MCF 10A (cell line): ENCODE measurements at regions of chr9 and their contacts with region 1.

Region 1: DNA sequence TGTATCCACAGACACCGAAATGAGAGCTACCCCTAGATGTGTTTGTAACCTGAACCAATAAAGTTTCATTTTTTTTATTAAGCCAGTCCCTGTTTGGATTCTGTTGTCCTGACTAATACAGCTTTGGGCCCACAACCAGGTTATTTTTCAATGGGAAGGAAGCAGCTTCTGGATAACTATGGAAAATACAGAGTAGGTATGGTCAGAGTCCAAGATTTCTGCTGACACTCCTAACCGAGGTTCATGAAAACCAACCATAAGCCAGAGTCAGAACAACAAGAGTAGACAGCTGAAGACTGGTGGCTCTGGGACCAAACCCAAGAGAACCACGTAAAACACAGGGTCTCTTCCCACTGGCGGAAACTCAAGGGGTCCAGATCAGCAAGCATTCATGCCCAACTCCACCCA is 10.8 kb downstream of the KLF9 start:
- DNase-seq: no peak
- H3K4me3 Mint-ChIP-seq: no peak overlapping the region
- H3K27ac Mint-ChIP-seq: no peak overlapping the region
- H3K4me1 Mint-ChIP-seq: peaks cover 19% of the 10 kb centered on the region
- H3K27me3 Mint-ChIP-seq: no peaks in the 10 kb centered on the region
- CTCF ChIP-seq: no peak

Region 2: GRCh38 chr9:70205367-70206032 is 198.1 kb before region 1 on chr9:
- CTCF ChIA-PET with region 1: no interaction called
- POLR2A ChIA-PET with region 1: no interaction called
- intact Hi-C with region 1: no loop called
- DNase-seq: no peak
- H3K4me3 Mint-ChIP-seq: peak overlapping the region; percentile 72
- H3K27ac Mint-ChIP-seq: no peak overlapping the region
- H3K4me1 Mint-ChIP-seq: no peaks in the 10 kb centered on the region
- H3K27me3 Mint-ChIP-seq: no peaks in the 10 kb centered on the region
- CTCF ChIP-seq: no peak

Region 3: DNA sequence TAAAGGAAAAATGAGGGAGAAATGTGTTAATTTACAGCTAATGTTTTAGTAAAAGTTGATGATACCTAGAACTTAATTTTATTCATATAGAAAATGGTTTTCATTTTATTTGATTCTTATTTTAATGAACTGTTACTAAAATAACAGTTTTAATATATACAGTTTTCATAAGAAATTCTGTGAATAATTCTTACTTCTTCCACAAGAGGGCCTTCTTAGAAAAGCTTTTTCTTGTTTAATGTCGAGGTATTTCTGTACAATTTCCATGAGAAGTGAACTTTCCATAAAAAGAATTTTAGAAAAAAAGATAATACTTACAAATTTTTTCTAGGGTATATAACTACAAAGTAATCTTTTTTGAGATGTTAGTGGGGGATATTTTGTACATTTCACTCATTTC is 63.0 kb before region 1 on chr9:
- CTCF ChIA-PET with region 1: interaction called, 11 read pairs
- POLR2A ChIA-PET with region 1: interaction called, 3 read pairs
- intact Hi-C with region 1: no loop called
- DNase-seq: peak; percentile 25
- H3K4me3 Mint-ChIP-seq: no peak overlapping the region
- H3K27ac Mint-ChIP-seq: no peak overlapping the region
- H3K4me1 Mint-ChIP-seq: no peaks in the 10 kb centered on the region
- H3K27me3 Mint-ChIP-seq: no peaks in the 10 kb centered on the region
- CTCF ChIP-seq: peak; percentile 23